MCF 10A (cell line): ENCODE measurements at regions of chr6 and their contacts with region 1.

Region 1: DNA sequence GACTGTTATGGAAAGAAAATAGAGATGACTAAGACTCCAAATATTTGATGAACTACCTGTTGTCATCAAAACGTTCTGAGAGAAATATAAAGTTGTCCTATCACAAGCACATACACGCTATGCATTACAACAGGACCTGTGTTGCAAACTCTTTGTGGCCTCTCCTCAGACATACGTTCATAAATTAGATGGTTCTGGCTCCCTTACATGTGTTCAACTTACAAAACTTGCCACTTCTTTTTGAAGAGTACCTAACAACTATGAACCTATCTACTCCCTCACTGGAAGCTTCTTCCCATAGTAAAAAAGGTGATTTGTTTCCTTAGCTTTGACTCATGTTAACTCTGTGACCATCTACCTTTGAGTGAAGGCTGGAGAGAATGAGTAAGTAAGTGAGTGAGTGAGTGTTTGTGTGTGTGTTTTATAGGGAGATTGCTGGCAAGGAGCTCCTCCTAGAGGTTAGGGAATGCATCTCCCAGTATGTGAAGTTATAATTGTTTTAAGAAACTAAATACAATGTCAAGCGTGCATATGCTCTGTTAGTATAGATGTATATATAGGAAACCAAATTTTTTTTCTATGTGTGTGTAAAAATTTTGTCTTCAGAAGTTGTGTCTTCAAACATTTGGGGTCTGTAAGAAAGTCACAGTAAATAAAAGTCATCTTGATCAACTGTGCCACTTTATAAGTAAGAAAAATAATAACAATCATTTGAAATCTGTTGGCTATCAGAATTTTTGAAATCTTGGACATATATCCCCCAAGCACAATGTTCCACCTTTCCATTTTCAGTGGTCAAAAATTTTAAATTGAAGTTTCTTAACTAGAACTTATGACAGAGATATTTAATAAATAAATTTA is 1211.1 kb upstream of the GJE1 start:
- DNase-seq: peak; percentile 85
- H3K4me3 Mint-ChIP-seq: no peak overlapping the region
- H3K27ac Mint-ChIP-seq: peak overlapping the region; percentile 66
- H3K4me1 Mint-ChIP-seq: peaks cover 6% of the 10 kb centered on the region
- H3K27me3 Mint-ChIP-seq: no peaks in the 10 kb centered on the region
- CTCF ChIP-seq: peak; percentile 82

Region 2: DNA sequence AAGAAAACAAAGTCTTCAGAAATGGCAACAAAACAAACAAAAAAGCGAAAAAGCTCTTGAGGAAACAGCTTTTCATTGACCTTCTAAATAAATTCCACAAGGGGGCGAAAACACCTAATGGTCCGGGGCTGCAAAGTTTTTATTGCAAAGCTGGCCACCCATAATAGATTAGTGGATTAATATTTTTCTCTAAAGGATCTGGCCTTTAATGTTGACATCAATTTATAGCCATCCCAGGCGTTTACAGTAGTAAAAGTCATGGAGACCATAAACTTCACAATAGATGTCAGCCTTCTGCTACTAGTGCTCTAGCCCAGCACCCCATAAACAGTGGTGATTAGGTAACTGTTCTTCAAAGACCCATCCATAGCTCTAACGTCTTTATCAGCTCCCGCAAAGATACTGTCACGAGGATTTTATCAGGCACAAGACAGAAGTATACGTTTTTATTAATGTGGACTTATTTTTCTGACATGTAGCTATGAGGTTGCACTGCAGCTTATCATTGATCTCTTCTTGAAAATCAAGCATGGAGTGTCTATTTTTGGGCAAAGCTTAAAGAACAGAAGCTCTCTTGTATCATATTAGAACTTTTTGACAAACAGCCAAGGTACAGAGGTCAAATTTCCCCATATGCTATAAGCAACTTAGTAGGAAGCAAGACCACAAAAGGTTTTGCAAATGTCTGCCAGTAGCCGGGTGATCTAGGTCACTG is 1551.9 kb before region 1 on chr6:
- CTCF ChIA-PET with region 1: interaction called, 3 read pairs
- POLR2A ChIA-PET with region 1: interaction called, 10 read pairs
- intact Hi-C with region 1: loop called (anchors 1 kb)
- DNase-seq: peak; percentile 51
- H3K4me3 Mint-ChIP-seq: peak overlapping the region; percentile 97
- H3K27ac Mint-ChIP-seq: peak overlapping the region; percentile 42
- H3K4me1 Mint-ChIP-seq: peaks cover 20% of the 10 kb centered on the region
- H3K27me3 Mint-ChIP-seq: no peaks in the 10 kb centered on the region
- CTCF ChIP-seq: peak; percentile 68

Region 3: DNA sequence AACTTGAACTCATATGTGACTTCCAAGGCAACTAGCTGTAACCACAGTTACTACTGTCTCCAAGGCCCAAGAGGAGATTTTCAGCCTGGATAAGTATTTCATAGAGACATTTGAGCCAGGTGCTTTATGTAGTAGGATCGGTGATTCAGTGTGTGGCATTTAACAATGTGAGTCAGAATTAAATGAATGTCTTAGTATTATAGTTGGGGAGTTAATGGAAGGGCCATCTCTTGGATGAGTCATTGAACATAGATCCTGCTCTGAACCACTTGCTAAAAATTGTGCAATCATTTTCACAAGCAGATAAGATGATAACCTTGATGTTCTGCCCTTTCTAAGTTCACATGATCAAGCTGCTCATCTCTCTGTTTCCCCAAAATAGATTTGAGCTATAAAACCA is 878.3 kb before region 1 on chr6:
- CTCF ChIA-PET with region 1: no interaction called
- POLR2A ChIA-PET with region 1: no interaction called
- intact Hi-C with region 1: loop called (anchors 5 kb)
- DNase-seq: peak; percentile 90
- H3K4me3 Mint-ChIP-seq: no peak overlapping the region
- H3K27ac Mint-ChIP-seq: peak overlapping the region; percentile 21
- H3K4me1 Mint-ChIP-seq: peaks cover 43% of the 10 kb centered on the region
- H3K27me3 Mint-ChIP-seq: no peaks in the 10 kb centered on the region
- CTCF ChIP-seq: no peak

Region 4: DNA sequence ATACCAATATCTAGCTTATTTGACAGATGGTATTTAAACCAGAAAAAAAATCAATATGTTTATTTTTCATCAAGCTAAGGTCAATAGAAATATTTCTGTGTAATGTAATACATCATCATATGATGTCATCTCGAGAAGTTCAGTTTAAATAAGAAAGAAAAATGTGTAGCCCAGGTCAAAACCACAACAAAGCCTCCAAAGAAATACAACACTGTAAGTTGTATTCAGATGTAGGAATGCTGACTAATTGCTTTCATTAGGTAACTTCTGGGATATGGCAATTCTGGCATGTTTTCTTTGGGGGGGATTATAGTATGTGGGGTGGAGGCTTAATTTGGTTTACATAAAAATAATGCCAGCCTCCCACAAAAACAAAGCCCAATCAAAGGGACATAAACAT is 665.4 kb before region 1 on chr6:
- CTCF ChIA-PET with region 1: no interaction called
- POLR2A ChIA-PET with region 1: no interaction called
- intact Hi-C with region 1: loop called (anchors 5 kb)
- DNase-seq: peak; percentile 8
- H3K4me3 Mint-ChIP-seq: no peak overlapping the region
- H3K27ac Mint-ChIP-seq: no peak overlapping the region
- H3K4me1 Mint-ChIP-seq: peaks cover 5% of the 10 kb centered on the region
- H3K27me3 Mint-ChIP-seq: no peaks in the 10 kb centered on the region
- CTCF ChIP-seq: no peak

Region 5: DNA sequence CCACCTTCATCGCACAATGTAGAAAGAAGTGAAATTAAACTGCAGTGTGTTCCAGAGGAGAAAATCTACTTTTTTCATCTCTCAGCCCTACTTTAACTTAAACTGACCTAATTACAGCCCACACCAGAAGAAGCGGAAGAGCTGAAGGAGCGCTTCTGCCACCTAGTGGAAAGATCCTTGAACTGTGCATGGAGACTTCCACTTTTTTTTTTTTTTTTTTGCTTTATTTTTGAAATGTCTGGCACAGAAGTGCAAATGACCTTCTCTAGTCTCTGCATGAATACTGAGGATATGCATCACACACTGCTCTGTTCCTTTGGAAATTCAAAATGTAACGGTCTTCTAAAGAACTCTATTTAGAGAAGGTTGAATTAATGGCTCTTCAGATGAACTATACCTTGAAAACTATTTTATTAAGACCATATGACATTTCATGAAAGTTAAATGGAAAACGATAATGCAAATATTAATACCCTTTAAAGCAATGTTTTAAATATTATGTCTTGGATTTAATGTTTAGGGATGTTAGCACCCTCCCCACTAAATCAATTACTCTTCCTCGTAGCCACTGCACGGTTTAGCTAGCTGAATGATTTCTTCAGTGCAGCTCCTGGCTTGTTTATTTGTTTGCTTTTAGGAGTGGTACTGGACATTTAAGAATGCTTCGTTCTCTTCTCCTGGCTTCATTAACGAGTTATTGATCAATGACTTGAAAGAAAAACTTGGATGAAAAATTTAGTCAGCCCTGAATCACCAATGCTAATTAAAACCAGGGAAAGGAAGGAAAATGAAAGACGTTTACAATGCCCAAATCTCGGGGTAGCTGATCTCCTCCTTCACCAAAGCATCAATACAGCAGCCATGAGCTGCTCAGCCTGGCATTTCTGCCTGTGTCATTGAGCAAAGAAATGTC is 641.5 kb after region 1 on chr6:
- CTCF ChIA-PET with region 1: no interaction called
- POLR2A ChIA-PET with region 1: no interaction called
- intact Hi-C with region 1: loop called (anchors 2 kb)
- DNase-seq: peak; percentile 85
- H3K4me3 Mint-ChIP-seq: peak overlapping the region; percentile 21
- H3K27ac Mint-ChIP-seq: peak overlapping the region; percentile 74
- H3K4me1 Mint-ChIP-seq: no peaks in the 10 kb centered on the region
- H3K27me3 Mint-ChIP-seq: no peaks in the 10 kb centered on the region
- CTCF ChIP-seq: peak; percentile 85